ENCODE measurements at regions of chr4 and their contacts with region 1.

Region 1: DNA sequence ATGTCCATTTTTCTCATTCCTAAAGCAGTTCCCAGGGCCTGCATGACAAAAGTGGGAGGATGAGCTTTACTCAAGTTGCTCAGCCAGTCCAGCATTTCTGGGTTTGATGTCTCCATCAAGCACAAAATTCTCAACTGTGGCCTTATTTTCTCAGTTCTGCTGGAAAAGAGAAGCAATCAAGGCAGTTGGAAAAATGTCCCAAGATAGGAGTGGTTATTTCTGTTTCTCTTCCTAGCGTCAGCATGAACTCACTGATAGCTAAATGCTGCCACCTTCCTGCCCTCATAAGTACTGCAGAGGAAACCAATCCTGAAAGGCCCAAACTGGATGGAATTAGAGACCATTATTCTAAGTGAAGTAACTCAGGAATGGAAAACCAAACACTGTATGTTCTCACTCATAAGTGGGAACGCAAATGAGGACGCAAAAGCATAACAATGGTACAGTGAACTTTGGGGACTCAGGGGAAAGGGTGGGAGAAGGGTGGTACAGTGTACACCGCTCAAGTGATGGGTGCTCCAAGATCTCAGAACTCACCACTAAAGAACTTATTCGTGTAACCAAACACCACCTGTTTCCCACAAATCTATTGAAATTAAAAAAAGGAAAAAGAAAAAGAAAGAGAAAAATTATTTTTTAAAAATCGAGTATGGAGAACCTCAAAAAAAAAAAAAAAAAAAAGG is 29.6 kb downstream of the ADH7 start:
- DNase-seq: peak; percentile 37 to 55
- ATAC-seq: peak; percentile 74 to 84
- H3K4me3 ChIP-seq: no peak overlapping the region
- H3K27ac ChIP-seq: peak overlapping the region; percentile 56 to 71 (median 63)
- H3K4me1 ChIP-seq: peaks cover 0 to 23% of the 10 kb centered on the region in 2 donors
- H3K27me3 ChIP-seq: no peaks in the 10 kb centered on the region
- CTCF ChIP-seq: peak; percentile 94 to 96 (median 95)
- POLR2A ChIP-seq: no peak

Region 2: GRCh38 chr4:99205153-99205979 is 200.2 kb before region 1 on chr4:
- in situ Hi-C with region 1: loop called in 1 of 4 experiments (anchors 10 kb)
- intact Hi-C with region 1: loop called (anchors 2 kb)
- DNase-seq: peak; percentile 10 to 49
- ATAC-seq: peak; percentile 77 to 84
- H3K4me3 ChIP-seq: no peak overlapping the region
- H3K27ac ChIP-seq: no peak overlapping the region
- H3K4me1 ChIP-seq: no peaks in the 10 kb centered on the region
- H3K27me3 ChIP-seq: no peaks in the 10 kb centered on the region
- CTCF ChIP-seq: no peak
- POLR2A ChIP-seq: no peak

Region 3: GRCh38 chr4:99352602-99353537 is 52.7 kb before region 1 on chr4 and contains the start of gene ADH1C:
- in situ Hi-C with region 1: no loop called
- intact Hi-C with region 1: no loop called
- DNase-seq: no peak
- ATAC-seq: peak in 1 of 2 donors; percentile 60
- H3K4me3 ChIP-seq: peak within 1 kb of the TSS; percentile 8 to 26 (median 10)
- H3K27ac ChIP-seq: peak within 1 kb of the TSS; percentile 30 to 63 (median 32)
- H3K4me1 ChIP-seq: no peaks in the 10 kb centered on the region
- H3K27me3 ChIP-seq: no peaks in the 10 kb centered on the region
- CTCF ChIP-seq: no peak
- POLR2A ChIP-seq: no peak
- total RNA-seq, gene ADH1C: 16.1 to 30.6 (median 26.6) TPM

Region 4: DNA sequence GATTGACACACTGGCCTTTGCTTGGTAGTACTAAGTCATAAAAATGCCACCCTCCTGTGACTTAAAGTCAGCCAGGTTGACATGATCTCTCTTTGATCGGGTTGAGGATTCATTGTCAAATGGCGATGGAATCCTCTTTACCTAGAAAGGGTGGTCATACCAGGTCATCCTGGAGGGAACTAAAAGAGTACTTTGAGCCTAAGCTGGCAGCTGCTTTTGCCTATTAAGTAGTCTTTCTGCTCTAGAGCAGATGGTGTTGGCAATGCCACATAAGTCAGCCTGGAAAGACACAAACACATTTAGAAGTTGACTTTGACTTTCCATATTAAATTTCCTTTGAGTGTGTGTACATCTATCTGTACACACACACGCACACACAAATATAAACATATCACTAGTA is 291.2 kb after region 1 on chr4:
- in situ Hi-C with region 1: no loop called
- intact Hi-C with region 1: no loop called
- DNase-seq: no peak
- ATAC-seq: no peak
- H3K4me3 ChIP-seq: no peak overlapping the region
- H3K27ac ChIP-seq: peak overlapping the region in 2 of 4 donors; percentile 10 to 49
- H3K4me1 ChIP-seq: peaks cover 4 to 9% of the 10 kb centered on the region in 2 donors
- H3K27me3 ChIP-seq: no peaks in the 10 kb centered on the region
- CTCF ChIP-seq: no peak
- POLR2A ChIP-seq: no peak